Breast epithelium (tissue), 4 donors: ENCODE measurements at regions of chr18 and their contacts with region 1.

Region 1: DNA sequence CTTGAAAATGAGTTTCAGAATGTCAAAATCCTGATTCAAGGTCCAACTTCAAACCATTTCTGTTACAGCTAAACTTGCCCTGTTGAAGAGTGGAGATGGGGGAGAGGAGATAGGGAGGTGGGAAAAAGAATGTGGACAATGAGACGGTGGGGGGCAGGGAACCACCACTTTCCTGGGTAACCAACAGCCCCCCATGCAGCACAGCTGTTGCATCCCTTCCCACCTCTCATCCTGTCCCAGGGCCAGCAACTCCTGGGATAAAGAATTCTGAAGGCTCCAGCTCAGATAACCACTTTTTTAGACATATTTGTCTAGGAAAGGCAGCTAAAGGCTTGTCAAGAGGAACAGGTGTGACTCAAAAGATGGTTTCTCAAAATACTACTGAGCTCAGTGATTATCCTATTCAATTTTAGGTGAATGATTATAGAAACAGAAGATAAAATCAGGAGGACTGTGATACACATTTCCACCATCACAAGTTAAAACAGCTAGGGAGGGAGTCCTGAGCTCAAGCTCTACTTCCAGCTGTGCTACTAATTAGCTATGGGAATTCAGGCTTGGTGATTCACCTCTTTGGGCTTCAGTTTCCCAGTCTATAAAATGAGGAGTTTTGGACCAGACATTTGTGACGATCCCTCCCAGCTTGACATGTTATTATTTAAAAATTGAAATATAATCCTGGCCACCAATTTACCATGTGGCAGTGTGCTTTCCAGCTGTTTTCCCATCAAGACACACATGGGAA is 36.3 kb downstream of the HDHD2 start:
- DNase-seq: no peak
- H3K4me3 ChIP-seq: no peak overlapping the region
- H3K27ac ChIP-seq: no peak overlapping the region
- H3K4me1 ChIP-seq: no peaks in the 10 kb centered on the region
- H3K27me3 ChIP-seq: no peaks in the 10 kb centered on the region
- CTCF ChIP-seq: no peak
- POLR2A ChIP-seq: no peak

Region 2: GRCh38 chr18:45879681-45880655 is 1234.0 kb before region 1 on chr18:
- intact Hi-C with region 1: no loop called
- DNase-seq: peak; percentile 45 to 73
- H3K4me3 ChIP-seq: no peak overlapping the region
- H3K27ac ChIP-seq: peak overlapping the region in 1 of 2 donors; percentile 9
- H3K4me1 ChIP-seq: no peaks in the 10 kb centered on the region
- H3K27me3 ChIP-seq: no peaks in the 10 kb centered on the region
- CTCF ChIP-seq: peak; percentile 86 to 97 (median 92)
- POLR2A ChIP-seq: no peak

Region 3: DNA sequence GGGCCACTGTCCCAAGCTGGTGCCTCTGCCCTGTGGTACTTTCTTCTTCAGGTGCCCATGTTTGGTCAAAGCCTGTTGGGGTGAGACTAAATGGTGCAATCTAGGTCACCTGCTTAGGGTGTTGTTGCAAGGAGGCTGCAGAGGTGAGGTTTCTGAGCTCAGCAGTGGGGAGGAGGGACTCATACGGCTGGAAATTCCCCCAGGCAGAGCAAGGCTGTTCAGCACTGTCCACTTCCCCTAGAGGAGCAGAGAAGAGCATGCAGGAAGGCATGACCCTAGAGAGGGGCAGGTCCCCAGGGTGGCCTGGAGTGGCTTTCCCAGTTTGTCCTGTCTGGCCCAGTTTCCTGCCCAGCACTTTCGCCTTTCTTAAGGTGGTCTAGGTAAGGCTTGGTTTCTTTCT is 798.8 kb before region 1 on chr18:
- intact Hi-C with region 1: loop called (anchors 10 kb)
- DNase-seq: no peak
- H3K4me3 ChIP-seq: no peak overlapping the region
- H3K27ac ChIP-seq: no peak overlapping the region
- H3K4me1 ChIP-seq: no peaks in the 10 kb centered on the region
- H3K27me3 ChIP-seq: no peaks in the 10 kb centered on the region
- CTCF ChIP-seq: no peak
- POLR2A ChIP-seq: no peak

Region 4: DNA sequence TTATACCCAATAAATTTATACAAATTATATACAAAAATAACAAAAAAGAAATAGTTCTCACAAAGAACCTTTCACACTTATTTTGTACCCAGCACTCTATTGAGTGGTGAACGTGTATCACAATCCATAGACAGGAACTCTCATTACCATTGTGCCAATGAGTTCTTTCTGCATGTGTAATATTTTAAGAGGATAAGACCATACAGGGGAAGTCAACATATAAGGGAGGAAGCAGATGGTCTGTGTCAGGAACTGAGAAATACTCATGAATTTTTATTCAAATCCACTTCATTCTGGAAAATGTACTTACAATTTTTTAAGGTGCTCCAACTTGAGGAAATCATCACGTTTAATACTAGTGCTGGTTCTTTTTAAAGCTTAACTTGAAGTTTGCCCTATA is 51.5 kb before region 1 on chr18:
- intact Hi-C with region 1: no loop called
- DNase-seq: no peak
- H3K4me3 ChIP-seq: no peak overlapping the region
- H3K27ac ChIP-seq: no peak overlapping the region
- H3K4me1 ChIP-seq: no peaks in the 10 kb centered on the region
- H3K27me3 ChIP-seq: no peaks in the 10 kb centered on the region
- CTCF ChIP-seq: no peak
- POLR2A ChIP-seq: no peak

Region 5: GRCh38 chr18:47143899-47144485 is 30.0 kb after region 1 on chr18:
- intact Hi-C with region 1: no loop called
- DNase-seq: no peak
- H3K4me3 ChIP-seq: no peak overlapping the region
- H3K27ac ChIP-seq: no peak overlapping the region
- H3K4me1 ChIP-seq: no peaks in the 10 kb centered on the region
- H3K27me3 ChIP-seq: no peaks in the 10 kb centered on the region
- CTCF ChIP-seq: no peak
- POLR2A ChIP-seq: no peak

Region 6: DNA sequence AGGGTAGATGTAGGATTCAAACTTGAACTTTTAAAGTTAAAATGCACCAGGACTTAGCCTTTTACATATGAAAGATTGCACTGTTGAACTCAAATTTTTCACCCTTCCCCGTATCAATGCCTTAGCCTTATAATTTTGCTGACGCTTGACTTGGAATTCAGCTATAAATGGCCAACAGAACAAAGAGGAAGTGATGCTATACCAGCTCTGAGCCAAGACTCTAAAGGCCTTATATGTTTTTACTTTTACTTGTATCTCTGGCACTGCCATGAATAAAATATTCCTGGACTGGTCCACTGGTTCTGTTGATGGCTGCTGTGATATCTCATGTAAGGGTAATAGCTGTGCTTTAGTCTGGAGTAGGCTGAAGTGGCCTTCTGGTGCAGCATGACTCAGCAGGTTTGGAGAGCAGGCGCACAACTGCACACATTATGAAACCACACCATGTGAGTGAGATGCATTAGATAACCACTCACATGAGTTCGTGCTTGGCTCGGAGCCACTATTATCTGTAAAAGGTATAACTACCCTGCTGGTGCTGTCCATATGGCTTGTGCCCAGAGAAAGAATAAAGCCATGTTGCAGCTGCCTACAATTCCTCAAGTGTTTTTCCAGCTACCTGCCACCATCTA is 70.6 kb after region 1 on chr18:
- intact Hi-C with region 1: loop called (anchors 10 kb)
- DNase-seq: no peak
- H3K4me3 ChIP-seq: no peak overlapping the region
- H3K27ac ChIP-seq: no peak overlapping the region
- H3K4me1 ChIP-seq: no peaks in the 10 kb centered on the region
- H3K27me3 ChIP-seq: no peaks in the 10 kb centered on the region
- CTCF ChIP-seq: no peak
- POLR2A ChIP-seq: no peak